CD4-positive, alpha-beta memory T cell (primary cell): ENCODE measurements at regions of chr12 and their contacts with region 1.

Region 1: DNA sequence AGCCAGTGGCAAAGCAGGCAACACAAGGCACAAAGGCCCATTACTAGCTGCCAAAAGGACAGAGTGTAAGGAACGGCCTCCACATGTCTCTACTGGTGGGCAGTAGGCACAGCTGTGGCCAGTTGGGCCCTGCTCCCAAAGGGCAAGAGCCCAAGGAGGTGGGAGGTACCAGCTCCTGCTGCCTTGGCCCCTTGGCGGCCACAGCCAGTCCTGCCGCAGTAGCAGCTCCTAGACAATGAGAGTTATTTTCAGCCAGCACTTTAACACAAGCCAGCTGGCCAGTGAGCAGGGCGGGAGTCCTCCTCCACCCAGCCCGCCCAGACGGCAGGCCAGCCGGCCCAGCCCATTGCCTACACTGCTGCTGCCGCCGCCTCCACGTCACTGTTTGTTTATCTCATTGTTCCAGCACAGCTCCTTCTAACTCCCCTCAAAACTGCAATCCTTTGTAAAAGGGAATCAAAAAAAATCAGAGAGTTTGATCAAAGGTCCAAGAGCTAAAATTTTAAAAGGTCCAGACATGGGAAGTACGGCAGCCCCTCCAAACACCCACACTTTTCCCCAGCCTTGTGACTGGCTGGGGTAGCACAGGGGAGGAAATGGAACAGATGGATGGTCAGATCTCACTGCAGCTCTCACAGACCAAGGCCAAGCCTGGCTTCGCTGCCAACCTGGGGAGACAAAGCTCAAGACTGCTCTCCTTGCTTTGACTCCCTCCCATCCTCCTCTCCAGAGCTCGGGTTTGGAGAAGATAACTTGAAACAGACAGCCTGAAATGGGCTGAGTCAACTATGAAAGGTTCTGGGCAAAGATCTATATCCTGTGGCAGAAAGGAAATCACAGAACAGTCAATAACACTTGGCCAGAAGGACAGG is 33.5 kb downstream of the FMNL3 start:
- DNase-seq: peak in 1 of 5 donors; percentile 12
- H3K4me3 ChIP-seq: no peak overlapping the region
- H3K4me3 Mint-ChIP-seq: peak overlapping the region in 7 of 8 donors; percentile 8 to 77 (median 46)
- H3K27ac ChIP-seq: peak overlapping the region; percentile 80
- H3K27ac Mint-ChIP-seq: peak overlapping the region; percentile 92 to 99 (median 97)
- H3K4me1 ChIP-seq: peaks cover 76% of the 10 kb centered on the region
- H3K4me1 Mint-ChIP-seq: peaks cover 68 to 85% (median 78%) of the 10 kb centered on the region in 4 donors
- H3K27me3 ChIP-seq: no peaks in the 10 kb centered on the region
- H3K27me3 Mint-ChIP-seq: no peaks in the 10 kb centered on the region

Region 2: GRCh38 chr12:49403971-49404450 is 269.7 kb before region 1 on chr12:
- CTCF ChIA-PET with region 1: no interaction called
- POLR2A ChIA-PET with region 1: no interaction called
- intact Hi-C with region 1: no loop called
- DNase-seq: peak in 3 of 5 donors; percentile 5 to 17 (median 9)
- H3K4me3 ChIP-seq: no peak overlapping the region
- H3K4me3 Mint-ChIP-seq: peak overlapping the region in 2 of 8 donors; percentile 1 to 38
- H3K27ac ChIP-seq: no peak overlapping the region
- H3K27ac Mint-ChIP-seq: peak overlapping the region in 2 of 7 donors; percentile 25 to 39
- H3K4me1 ChIP-seq: peaks cover 14% of the 10 kb centered on the region
- H3K4me1 Mint-ChIP-seq: peaks cover 15 to 25% (median 18%) of the 10 kb centered on the region in 4 donors
- H3K27me3 ChIP-seq: no peaks in the 10 kb centered on the region
- H3K27me3 Mint-ChIP-seq: no peaks in the 10 kb centered on the region

Region 3: DNA sequence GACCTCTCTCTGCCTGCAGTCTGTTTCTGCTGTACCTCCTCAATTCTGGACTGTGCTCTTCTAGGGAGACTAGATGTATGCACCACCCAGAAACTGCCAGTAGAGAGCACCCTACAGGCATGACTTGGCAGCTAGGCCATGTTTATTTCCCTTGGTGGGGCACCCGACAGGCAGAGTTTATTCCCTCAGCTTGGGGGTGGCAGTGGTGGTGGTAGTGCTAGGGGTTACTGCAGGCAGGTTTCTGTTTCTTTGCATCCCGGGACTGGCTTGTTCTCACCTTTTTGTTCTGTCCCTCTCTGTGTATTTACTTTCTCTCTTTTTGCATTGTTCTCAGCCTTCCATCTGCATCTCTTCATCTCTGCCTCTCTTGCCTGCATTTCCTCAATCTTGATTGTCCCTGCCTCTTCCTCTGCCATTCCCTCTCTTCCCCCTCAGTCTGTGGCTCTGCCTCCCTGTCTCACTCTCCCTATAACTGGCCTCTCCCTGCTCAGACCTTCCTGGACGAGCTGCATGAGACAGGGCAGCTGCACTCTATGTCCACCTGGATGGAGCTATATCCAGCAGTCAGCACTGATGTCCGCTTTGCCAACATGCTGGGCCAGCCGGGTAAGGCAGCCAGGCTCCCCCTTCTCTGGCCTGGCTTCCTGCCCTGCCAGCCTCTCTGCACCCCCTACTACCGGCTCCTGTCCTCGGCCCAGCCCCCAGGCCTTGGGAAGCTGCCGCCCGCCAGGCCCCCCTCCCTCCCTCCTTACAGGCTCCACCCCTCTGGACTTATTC is 36.5 kb before region 1 on chr12:
- CTCF ChIA-PET with region 1: interaction called, 56 read pairs
- POLR2A ChIA-PET with region 1: interaction called, 4 read pairs
- intact Hi-C with region 1: no loop called
- DNase-seq: peak; percentile 53 to 71 (median 59)
- H3K4me3 ChIP-seq: no peak overlapping the region
- H3K4me3 Mint-ChIP-seq: no peak overlapping the region
- H3K27ac ChIP-seq: no peak overlapping the region
- H3K27ac Mint-ChIP-seq: peak overlapping the region in 5 of 7 donors; percentile 2 to 81 (median 30)
- H3K4me1 ChIP-seq: peaks cover 8% of the 10 kb centered on the region
- H3K4me1 Mint-ChIP-seq: peaks cover 9 to 13% (median 11%) of the 10 kb centered on the region in 4 donors
- H3K27me3 ChIP-seq: no peaks in the 10 kb centered on the region
- H3K27me3 Mint-ChIP-seq: no peaks in the 10 kb centered on the region

Region 4: DNA sequence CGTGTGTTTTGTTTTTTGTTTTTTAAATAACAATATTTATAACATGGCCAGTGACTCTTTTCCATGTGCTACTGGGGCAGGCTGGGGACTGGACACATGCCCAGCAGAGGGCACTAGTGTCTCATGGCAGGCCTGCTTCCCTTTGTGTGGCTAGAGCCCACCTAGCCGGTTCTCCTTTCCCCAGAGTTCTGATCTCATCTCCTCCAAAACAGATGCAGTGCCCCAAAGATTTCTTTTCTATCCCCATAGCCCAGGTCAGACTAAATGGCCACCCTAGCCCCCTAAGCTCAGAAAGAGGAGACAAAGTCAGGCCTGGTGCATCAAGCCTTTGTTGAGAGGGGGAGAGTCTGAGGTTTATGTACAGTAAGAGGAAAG is 29.1 kb before region 1 on chr12:
- CTCF ChIA-PET with region 1: interaction called, 56 read pairs
- POLR2A ChIA-PET with region 1: interaction called, 9 read pairs
- intact Hi-C with region 1: loop called (anchors 2 kb)
- DNase-seq: peak; percentile 79 to 85 (median 80)
- H3K4me3 ChIP-seq: no peak overlapping the region
- H3K4me3 Mint-ChIP-seq: peak overlapping the region in 3 of 8 donors; percentile 36 to 43 (median 37)
- H3K27ac ChIP-seq: peak overlapping the region; percentile 42
- H3K27ac Mint-ChIP-seq: peak overlapping the region; percentile 76 to 96 (median 93)
- H3K4me1 ChIP-seq: peaks cover 18% of the 10 kb centered on the region
- H3K4me1 Mint-ChIP-seq: peaks cover 13 to 35% (median 22%) of the 10 kb centered on the region in 4 donors
- H3K27me3 ChIP-seq: no peaks in the 10 kb centered on the region
- H3K27me3 Mint-ChIP-seq: no peaks in the 10 kb centered on the region

Region 5: GRCh38 chr12:49662998-49663843 is 10.5 kb before region 1 on chr12:
- CTCF ChIA-PET with region 1: interaction called, 24 read pairs
- POLR2A ChIA-PET with region 1: interaction called, 83 read pairs
- intact Hi-C with region 1: loop called (anchors 1 kb)
- DNase-seq: peak; percentile 71 to 93 (median 75)
- H3K4me3 ChIP-seq: peak overlapping the region; percentile 48 to 50
- H3K4me3 Mint-ChIP-seq: peak overlapping the region; percentile 61 to 91 (median 84)
- H3K27ac ChIP-seq: peak overlapping the region; percentile 57
- H3K27ac Mint-ChIP-seq: peak overlapping the region; percentile 92 to 99 (median 97)
- H3K4me1 ChIP-seq: peaks cover 52% of the 10 kb centered on the region
- H3K4me1 Mint-ChIP-seq: peaks cover 56 to 84% (median 67%) of the 10 kb centered on the region in 4 donors
- H3K27me3 ChIP-seq: no peaks in the 10 kb centered on the region
- H3K27me3 Mint-ChIP-seq: no peaks in the 10 kb centered on the region

Region 6: GRCh38 chr12:49730568-49731101 is 57.0 kb after region 1 on chr12:
- CTCF ChIA-PET with region 1: no interaction called
- POLR2A ChIA-PET with region 1: no interaction called
- intact Hi-C with region 1: no loop called
- DNase-seq: no peak
- H3K4me3 ChIP-seq: no peak overlapping the region
- H3K4me3 Mint-ChIP-seq: no peak overlapping the region
- H3K27ac ChIP-seq: no peak overlapping the region
- H3K27ac Mint-ChIP-seq: no peak overlapping the region
- H3K4me1 ChIP-seq: no peaks in the 10 kb centered on the region
- H3K4me1 Mint-ChIP-seq: no peaks in the 10 kb centered on the region
- H3K27me3 ChIP-seq: no peaks in the 10 kb centered on the region
- H3K27me3 Mint-ChIP-seq: peaks cover 4 to 7% of the 10 kb centered on the region in 2 donors